ENCODE measurements at regions of chr1 and their contacts with region 1.

Region 1: DNA sequence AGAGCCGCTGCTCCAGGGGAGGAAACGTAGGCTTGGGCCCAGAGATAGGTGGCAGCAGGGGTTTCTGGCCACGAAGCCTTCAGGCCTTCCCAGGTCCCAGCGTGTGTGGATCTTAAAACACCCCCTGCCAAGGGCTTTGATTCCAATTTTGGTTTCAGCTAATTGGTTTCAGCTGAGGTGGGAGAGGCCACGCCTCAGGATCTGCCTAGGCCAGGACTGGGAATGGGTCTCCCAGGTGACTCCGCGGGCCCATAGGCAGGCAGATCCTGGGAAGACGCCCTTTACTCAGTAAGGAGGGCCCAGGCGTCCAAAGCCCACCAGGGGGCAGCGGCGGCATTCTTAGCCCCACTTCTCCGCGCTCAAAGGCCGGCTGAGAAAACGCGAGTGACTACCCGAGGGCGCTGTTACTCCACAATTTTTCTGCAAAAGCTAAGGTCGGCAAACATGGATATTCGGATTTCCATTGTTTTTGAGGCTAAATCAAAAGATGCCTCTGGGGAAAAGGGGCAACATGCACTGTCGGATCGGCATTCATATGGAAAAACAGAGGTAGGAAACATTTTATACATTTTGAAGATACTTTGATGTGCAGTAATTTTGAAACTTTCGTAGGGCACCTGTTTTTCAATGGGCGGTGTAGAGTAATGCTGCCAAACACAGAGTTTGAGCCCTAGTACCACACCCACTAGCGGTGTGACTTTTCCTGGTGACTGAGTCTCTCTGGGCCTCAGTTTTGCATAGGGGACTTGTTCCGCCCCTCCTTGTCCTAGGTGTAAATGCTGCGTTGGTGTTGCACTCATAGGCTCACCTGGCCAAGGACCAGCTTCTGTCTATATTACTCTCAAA is 31.8 kb upstream of the BCL10 start:
- DNase-seq: no peak
- H3K4me3 ChIP-seq: no peak overlapping the region
- H3K27ac ChIP-seq: no peak overlapping the region
- H3K27me3 ChIP-seq: no peaks in the 10 kb centered on the region
- CTCF ChIP-seq: peak; percentile 99

Region 2: GRCh38 chr1:85230305-85230980 is 77.8 kb before region 1 on chr1:
- CTCF ChIA-PET with region 1: no interaction called
- POLR2A ChIA-PET with region 1: no interaction called
- DNase-seq: no peak
- H3K4me3 ChIP-seq: no peak overlapping the region
- H3K27ac ChIP-seq: no peak overlapping the region
- H3K27me3 ChIP-seq: no peaks in the 10 kb centered on the region
- CTCF ChIP-seq: peak; percentile 33; the same call in 1 of the 2 replicates

Region 3: DNA sequence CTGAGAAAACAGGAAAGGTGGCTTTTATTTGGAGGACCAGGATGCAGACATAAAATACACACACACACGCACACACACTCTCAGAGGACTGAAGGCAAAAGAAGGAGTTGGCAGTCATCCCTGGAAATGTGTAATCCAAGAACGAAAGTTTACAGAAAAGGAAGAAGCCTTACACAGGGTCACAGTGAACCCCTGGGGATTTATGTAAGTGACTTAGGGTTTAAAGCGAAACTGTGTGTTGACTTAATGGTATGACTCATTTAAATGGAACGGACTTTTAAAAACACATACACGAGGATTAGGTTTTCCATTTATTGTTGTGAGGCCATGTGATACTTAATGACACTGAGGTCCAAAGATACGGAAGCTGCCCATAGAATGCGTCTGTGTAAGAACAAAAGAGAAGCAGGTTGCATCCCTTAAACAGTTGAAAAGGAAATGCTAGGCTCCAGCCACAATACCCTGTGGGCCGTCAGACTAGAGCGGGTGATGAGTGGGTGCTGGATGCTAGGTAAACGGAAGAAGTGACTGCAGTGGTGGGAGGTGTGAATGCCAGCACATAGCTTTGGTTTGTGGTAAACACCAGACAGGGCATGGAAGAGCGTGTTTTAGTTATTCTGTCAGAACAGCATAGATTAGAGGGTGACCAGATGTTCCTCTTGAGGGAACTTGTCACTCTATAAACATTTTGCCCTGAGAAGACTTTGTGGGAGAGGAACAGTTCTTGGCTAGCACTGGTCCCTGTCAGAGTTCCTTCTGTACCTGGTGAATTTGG is 10.2 kb before region 1 on chr1:
- CTCF ChIA-PET with region 1: interaction called, 12 read pairs
- POLR2A ChIA-PET with region 1: no interaction called
- DNase-seq: peak; percentile 98
- H3K4me3 ChIP-seq: peak overlapping the region; percentile 20; the same call in 1 of the 2 replicates
- H3K27ac ChIP-seq: peak overlapping the region; percentile 94
- H3K27me3 ChIP-seq: no peaks in the 10 kb centered on the region
- CTCF ChIP-seq: no peak

Region 4: DNA sequence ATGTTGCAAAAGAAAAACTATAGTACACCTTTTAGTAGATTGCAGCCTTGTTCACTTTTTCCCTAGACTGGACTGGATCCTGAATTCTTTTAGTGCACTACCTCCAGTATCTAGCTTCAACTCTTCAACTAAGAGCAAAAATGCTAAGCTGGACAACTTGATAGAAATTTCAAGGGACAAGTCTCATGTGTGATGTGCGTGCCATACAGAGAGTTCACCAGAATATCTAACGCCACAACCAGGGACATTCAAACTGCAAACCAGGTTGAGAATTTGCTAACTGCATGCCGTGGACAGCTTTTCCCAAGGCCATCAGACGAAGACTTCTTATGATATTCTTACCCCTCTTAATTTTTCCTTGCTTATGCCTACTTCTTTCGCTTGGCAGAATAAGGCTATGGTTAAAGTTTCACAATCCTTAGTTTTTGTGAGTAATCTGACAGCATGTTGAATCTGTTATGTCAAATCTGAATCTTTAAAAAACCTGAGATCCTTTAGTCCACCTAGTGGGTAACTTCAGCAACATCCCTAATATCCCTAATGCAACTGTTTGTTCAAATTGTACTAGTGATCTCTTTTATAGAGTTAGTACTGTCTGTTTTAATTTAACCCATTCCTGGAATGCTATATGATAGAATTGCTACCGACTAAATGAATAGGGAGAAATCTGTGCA is 90.3 kb after region 1 on chr1:
- CTCF ChIA-PET with region 1: interaction called, 18 read pairs
- POLR2A ChIA-PET with region 1: no interaction called
- DNase-seq: no peak
- H3K4me3 ChIP-seq: no peak overlapping the region
- H3K27ac ChIP-seq: no peak overlapping the region
- H3K27me3 ChIP-seq: no peaks in the 10 kb centered on the region
- CTCF ChIP-seq: peak; percentile 65

Region 5: DNA sequence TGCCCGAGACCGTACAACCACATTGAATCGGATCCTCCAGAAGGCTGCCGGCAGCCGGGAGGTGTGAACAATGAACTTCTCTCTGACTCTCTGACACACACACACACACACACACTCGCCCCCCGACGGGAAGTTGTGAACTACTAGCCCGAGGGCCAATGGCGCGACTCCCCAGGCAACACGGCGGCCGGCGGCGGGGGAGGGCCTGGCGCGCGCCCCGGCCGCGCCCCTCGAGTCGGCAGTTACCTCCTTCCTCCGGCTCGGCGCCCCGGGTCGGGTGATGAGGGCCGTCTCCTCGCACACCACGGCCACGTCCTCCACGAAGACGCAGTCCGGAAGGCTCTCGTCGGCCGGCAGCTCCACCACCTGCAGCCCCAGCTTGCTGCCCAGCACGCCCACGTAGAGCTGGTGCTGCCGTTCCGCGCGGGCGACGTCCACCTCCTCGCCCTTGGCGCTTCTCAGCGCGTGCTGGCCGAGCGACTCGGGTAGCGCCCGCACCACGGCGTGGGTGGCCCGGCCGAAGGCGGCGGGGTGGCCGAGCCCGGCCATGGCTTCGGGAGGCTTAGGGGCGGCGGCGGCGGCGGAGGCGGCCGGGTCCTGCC is 156.4 kb after region 1 on chr1:
- CTCF ChIA-PET with region 1: interaction called, 21 read pairs
- POLR2A ChIA-PET with region 1: no interaction called
- DNase-seq: no peak
- H3K4me3 ChIP-seq: peak overlapping the region; percentile 82
- H3K27ac ChIP-seq: peak overlapping the region; percentile 75
- H3K27me3 ChIP-seq: no peaks in the 10 kb centered on the region
- CTCF ChIP-seq: no peak

Region 6: GRCh38 chr1:85502625-85503083 is 194.4 kb after region 1 on chr1:
- CTCF ChIA-PET with region 1: interaction called, 30 read pairs
- POLR2A ChIA-PET with region 1: interaction called, 3 read pairs
- DNase-seq: peak; percentile 59
- H3K4me3 ChIP-seq: no peak overlapping the region
- H3K27ac ChIP-seq: peak overlapping the region; percentile 63
- H3K27me3 ChIP-seq: no peaks in the 10 kb centered on the region
- CTCF ChIP-seq: peak; percentile 70

Region 7: DNA sequence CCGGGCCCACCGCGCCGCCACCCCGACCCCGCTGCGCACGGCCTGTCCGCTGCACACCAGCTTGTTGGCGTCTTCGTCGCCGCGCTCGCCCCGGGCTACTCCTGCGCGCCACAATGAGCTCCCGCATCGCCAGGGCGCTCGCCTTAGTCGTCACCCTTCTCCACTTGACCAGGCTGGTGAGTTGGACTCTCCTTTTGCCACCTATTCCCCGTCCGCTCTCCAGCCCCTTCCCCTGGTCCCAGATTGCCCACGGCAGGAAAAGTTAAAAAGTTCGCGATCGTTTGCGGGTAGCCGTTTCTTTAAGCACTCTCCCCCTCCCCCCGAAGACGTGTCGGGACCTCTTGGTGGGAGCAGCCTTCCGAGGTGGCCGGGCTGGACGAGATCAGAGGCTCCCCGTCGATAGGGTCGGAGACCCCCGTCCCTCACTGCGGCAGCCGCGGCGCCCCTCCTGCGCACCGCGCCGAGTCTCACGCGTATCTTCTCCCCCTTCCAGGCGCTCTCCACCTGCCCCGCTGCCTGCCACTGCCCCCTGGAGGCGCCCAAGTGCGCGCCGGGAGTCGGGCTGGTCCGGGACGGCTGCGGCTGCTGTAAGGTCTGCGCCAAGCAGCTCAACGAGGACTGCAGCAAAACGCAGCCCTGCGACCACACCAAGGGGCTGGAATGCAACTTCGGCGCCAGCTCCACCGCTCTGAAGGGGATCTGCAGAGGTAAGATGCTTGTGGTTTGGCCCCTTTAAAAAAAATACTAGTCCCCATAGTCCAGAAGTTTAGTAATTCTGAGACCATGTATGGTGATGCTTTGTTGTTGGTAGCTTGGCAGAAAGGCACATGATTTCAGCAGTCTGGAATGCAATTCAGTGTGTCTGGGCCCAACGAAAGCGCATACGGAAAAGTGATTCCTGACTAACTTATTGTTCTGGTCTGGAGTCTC is 272.9 kb after region 1 on chr1:
- CTCF ChIA-PET with region 1: interaction called, 22 read pairs
- POLR2A ChIA-PET with region 1: no interaction called
- DNase-seq: peak; percentile 52
- H3K4me3 ChIP-seq: peak overlapping the region; percentile 93
- H3K27ac ChIP-seq: peak overlapping the region; percentile 99
- H3K27me3 ChIP-seq: no peaks in the 10 kb centered on the region
- CTCF ChIP-seq: peak; percentile 60